Naive thymus-derived CD4-positive, alpha-beta T cell (primary cell): ENCODE measurements at regions of chr13 and their contacts with region 1.

Region 1: GRCh38 chr13:32783067-32783466 is 196.8 kb downstream of the PDS5B start:
- DNase-seq: peak in 5 of 9 donors; percentile 21 to 46 (median 29)
- ATAC-seq: peak; percentile 66
- H3K4me3 ChIP-seq: no peak overlapping the region
- H3K4me3 Mint-ChIP-seq: peak overlapping the region in 9 of 10 donors; percentile 43 to 81 (median 74)
- H3K27ac ChIP-seq: peak overlapping the region; percentile 40
- H3K27ac Mint-ChIP-seq: peak overlapping the region; percentile 46 to 93 (median 83)
- H3K4me1 ChIP-seq: no peaks in the 10 kb centered on the region
- H3K4me1 Mint-ChIP-seq: peaks cover 19 to 39% (median 28%) of the 10 kb centered on the region in 7 donors
- H3K27me3 ChIP-seq: no peaks in the 10 kb centered on the region
- H3K27me3 Mint-ChIP-seq: no peaks in the 10 kb centered on the region

Region 2: DNA sequence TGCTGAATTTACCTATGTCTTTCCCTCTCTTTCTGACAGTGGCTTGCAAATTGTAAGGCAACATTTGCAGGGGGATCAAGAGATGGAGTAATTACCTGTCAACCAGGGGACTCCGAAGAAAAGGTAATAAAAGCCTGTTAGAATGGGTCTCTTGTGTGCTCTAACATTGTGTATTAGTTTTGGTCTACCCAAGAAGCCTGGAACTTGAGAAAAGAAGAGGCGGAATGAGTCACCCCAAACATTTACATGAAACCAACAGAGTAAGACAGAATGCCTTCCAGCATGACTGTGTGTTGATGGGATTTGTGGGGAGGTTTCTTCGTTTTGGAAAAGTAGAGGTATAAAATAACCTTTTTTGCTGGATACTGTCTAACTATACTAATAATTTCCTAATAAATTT is 504.6 kb before region 1 on chr13:
- CTCF ChIA-PET with region 1: no interaction called
- POLR2A ChIA-PET with region 1: no interaction called
- intact Hi-C with region 1: no loop called
- DNase-seq: no peak
- ATAC-seq: no peak
- H3K4me3 ChIP-seq: no peak overlapping the region
- H3K4me3 Mint-ChIP-seq: no peak overlapping the region
- H3K27ac ChIP-seq: no peak overlapping the region
- H3K27ac Mint-ChIP-seq: no peak overlapping the region
- H3K4me1 ChIP-seq: no peaks in the 10 kb centered on the region
- H3K4me1 Mint-ChIP-seq: peaks cover 0 to 2% (median 0%) of the 10 kb centered on the region in 7 donors
- H3K27me3 ChIP-seq: no peaks in the 10 kb centered on the region
- H3K27me3 Mint-ChIP-seq: no peaks in the 10 kb centered on the region

Region 3: DNA sequence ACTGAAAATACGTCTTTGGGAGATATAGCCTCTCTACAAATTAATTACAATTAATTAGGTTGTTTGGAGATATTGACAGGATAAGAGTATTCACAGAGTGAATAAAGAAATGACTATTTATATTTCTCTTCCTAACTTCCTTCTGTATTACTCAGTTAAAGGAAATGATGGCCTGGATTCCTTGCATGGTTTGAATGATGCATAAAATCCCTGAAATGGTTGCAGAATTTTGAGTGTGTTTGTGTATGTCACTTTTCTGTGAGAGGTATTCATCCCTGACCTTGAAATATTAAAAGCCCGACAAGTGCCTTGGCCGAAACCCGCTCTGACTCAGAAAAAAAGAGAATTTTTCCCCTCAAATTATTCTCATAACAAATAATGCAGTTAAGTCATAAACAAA is 106.8 kb before region 1 on chr13:
- CTCF ChIA-PET with region 1: no interaction called
- POLR2A ChIA-PET with region 1: no interaction called
- intact Hi-C with region 1: loop called in 1 of 2 experiments (anchors 5 kb)
- DNase-seq: no peak
- ATAC-seq: no peak
- H3K4me3 ChIP-seq: no peak overlapping the region
- H3K4me3 Mint-ChIP-seq: no peak overlapping the region
- H3K27ac ChIP-seq: no peak overlapping the region
- H3K27ac Mint-ChIP-seq: no peak overlapping the region
- H3K4me1 ChIP-seq: no peaks in the 10 kb centered on the region
- H3K4me1 Mint-ChIP-seq: peaks cover 0 to 5% (median 0%) of the 10 kb centered on the region in 7 donors
- H3K27me3 ChIP-seq: no peaks in the 10 kb centered on the region
- H3K27me3 Mint-ChIP-seq: no peaks in the 10 kb centered on the region

Region 4: DNA sequence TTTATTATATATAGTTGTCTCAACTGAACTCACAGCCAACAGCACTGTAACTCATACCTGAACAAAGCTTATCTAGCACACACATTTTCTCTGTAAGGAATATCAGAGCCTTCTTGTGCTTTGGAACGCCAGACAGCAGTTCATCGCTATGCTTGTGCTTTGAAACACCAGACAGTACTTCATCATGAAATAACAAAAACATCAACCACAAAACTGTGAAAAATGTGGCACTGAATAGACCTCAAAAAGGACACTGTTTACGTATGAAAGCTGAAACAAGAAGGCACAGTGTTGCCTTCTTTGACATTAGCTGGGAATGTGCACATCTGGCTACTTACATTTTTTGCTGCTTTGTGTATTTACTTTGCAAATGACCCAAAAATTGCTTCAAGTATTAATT is 36.6 kb before region 1 on chr13:
- CTCF ChIA-PET with region 1: no interaction called
- POLR2A ChIA-PET with region 1: no interaction called
- intact Hi-C with region 1: no loop called
- DNase-seq: no peak
- ATAC-seq: peak; percentile 41
- H3K4me3 ChIP-seq: no peak overlapping the region
- H3K4me3 Mint-ChIP-seq: no peak overlapping the region
- H3K27ac ChIP-seq: no peak overlapping the region
- H3K27ac Mint-ChIP-seq: no peak overlapping the region
- H3K4me1 ChIP-seq: no peaks in the 10 kb centered on the region
- H3K4me1 Mint-ChIP-seq: peaks cover 0 to 4% (median 0%) of the 10 kb centered on the region in 7 donors
- H3K27me3 ChIP-seq: no peaks in the 10 kb centered on the region
- H3K27me3 Mint-ChIP-seq: no peaks in the 10 kb centered on the region

Region 5: DNA sequence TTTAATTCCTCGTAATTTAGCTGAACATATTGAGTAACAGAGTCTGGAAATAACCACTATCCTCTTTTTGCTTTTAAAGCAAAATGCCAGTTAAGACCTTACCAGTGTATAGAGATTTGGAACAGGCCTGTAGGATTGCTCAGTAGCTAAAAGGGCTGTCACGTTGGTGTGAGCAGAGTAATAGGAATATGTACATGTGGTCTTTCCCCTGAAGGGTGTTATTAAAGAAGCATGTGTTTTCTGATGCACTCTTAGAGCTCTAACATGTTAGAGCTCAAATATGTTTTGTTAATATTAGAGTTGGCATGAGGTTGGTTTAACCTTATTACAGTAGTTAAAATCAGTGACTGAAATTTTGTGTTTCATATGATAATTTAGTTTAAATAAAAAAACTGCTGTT is 23.9 kb before region 1 on chr13:
- CTCF ChIA-PET with region 1: no interaction called
- POLR2A ChIA-PET with region 1: no interaction called
- intact Hi-C with region 1: loop called in 1 of 2 experiments (anchors 2 kb)
- DNase-seq: no peak
- ATAC-seq: no peak
- H3K4me3 ChIP-seq: no peak overlapping the region
- H3K4me3 Mint-ChIP-seq: no peak overlapping the region
- H3K27ac ChIP-seq: no peak overlapping the region
- H3K27ac Mint-ChIP-seq: no peak overlapping the region
- H3K4me1 ChIP-seq: no peaks in the 10 kb centered on the region
- H3K4me1 Mint-ChIP-seq: peaks cover 0 to 14% (median 0%) of the 10 kb centered on the region in 7 donors
- H3K27me3 ChIP-seq: no peaks in the 10 kb centered on the region
- H3K27me3 Mint-ChIP-seq: no peaks in the 10 kb centered on the region

Region 6: DNA sequence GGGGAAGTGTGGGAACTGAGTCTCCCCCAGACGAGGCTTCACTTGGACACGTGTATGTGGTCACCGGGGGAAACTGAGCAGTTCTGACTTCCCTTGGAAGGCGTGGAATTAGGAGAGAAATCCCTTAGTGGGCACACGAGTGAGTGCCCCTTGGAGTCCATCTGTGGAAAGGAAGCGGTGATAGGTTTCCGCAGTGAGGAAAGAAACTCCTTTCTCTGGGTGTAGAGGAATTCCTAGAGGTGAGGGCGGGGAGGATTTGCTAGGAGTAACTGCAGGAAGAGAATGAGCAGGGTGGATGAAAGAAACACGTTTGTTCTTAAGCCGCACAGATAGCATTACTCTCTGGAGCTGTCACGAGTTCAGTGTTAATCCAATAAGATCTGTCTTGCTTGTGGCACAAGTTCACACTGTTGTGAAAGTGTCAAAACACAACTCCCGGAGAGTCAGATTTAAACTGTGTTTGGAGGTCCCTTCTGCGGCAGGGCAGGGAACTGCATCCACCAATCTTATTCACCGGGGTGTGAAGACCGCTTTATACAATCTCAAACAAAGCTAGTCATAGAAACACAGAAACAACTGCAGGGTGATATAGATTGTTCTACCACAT is 234.4 kb after region 1 on chr13:
- CTCF ChIA-PET with region 1: no interaction called
- POLR2A ChIA-PET with region 1: no interaction called
- intact Hi-C with region 1: loop called in 1 of 2 experiments (anchors 5 kb)
- DNase-seq: peak in 6 of 9 donors; percentile 6 to 47 (median 18)
- ATAC-seq: peak; percentile 80
- H3K4me3 ChIP-seq: peak overlapping the region; percentile 30
- H3K4me3 Mint-ChIP-seq: peak overlapping the region; percentile 37 to 81 (median 73)
- H3K27ac ChIP-seq: no peak overlapping the region
- H3K27ac Mint-ChIP-seq: peak overlapping the region in 2 of 9 donors; percentile 49 to 66
- H3K4me1 ChIP-seq: peaks cover 3 to 7% of the 10 kb centered on the region in 2 donors
- H3K4me1 Mint-ChIP-seq: peaks cover 10 to 21% (median 15%) of the 10 kb centered on the region in 7 donors
- H3K27me3 ChIP-seq: peaks cover 4 to 7% of the 10 kb centered on the region in 2 donors
- H3K27me3 Mint-ChIP-seq: peaks cover 65 to 83% (median 71%) of the 10 kb centered on the region in 5 donors